Endothelial cell of umbilical vein (primary cell): ENCODE measurements at regions of chr2 and their contacts with region 1.

Region 1: DNA sequence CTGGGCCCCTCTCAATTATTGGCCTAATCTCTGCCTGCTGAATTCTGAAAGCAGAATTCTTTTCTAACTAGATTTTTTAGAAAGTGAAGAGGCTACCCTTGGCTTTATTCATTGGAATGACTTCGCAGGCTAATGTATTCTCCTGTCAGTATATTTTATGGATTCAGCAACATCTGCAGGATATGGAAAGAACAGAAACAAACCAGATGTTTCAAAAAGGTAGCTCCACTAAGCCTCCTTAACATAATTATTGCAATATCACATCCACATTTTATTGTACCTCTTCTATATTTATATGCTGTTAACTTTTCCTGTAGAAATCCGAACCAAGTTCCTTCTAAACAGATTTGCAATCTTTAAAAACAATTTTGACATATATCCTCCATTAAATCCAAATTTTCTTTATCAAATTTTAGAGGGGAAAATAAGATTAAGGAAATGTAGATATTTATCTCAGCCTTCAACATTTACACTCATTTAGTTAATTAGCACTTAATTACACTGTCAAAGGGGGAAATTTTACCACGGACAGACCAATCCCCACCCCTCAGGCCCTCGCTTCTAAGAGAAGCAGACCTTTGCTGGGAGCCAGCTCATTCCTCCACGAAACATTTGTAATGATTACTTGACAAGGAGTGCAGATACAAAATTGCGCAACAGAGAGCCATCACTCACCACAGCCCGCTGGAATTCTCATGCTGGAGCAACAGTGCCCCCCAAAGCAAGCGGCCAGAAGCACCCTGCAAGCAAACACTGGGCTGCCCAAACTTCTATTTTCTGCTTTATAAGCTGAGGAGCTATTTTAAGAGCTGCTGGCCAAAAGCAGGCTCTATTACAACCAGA is 253.4 kb downstream of the ETAA1 start:
- DNase-seq: peak; percentile 65
- H3K4me3 ChIP-seq: no peak overlapping the region
- H3K27ac ChIP-seq: no peak overlapping the region
- H3K4me1 ChIP-seq: no peaks in the 10 kb centered on the region
- H3K27me3 ChIP-seq: no peaks in the 10 kb centered on the region
- CTCF ChIP-seq: peak; percentile 55 to 67
- POLR2A ChIP-seq: no peak

Region 2: GRCh38 chr2:66699793-66700676 is 950.5 kb before region 1 on chr2:
- CTCF ChIA-PET with region 1: no interaction called
- POLR2A ChIA-PET with region 1: no interaction called
- dilution Hi-C with region 1: no loop called
- intact Hi-C with region 1: no loop called
- DNase-seq: no peak
- H3K4me3 ChIP-seq: no peak overlapping the region
- H3K27ac ChIP-seq: no peak overlapping the region
- H3K4me1 ChIP-seq: no peaks in the 10 kb centered on the region
- H3K27me3 ChIP-seq: no peaks in the 10 kb centered on the region
- CTCF ChIP-seq: no peak
- POLR2A ChIP-seq: no peak

Region 3: DNA sequence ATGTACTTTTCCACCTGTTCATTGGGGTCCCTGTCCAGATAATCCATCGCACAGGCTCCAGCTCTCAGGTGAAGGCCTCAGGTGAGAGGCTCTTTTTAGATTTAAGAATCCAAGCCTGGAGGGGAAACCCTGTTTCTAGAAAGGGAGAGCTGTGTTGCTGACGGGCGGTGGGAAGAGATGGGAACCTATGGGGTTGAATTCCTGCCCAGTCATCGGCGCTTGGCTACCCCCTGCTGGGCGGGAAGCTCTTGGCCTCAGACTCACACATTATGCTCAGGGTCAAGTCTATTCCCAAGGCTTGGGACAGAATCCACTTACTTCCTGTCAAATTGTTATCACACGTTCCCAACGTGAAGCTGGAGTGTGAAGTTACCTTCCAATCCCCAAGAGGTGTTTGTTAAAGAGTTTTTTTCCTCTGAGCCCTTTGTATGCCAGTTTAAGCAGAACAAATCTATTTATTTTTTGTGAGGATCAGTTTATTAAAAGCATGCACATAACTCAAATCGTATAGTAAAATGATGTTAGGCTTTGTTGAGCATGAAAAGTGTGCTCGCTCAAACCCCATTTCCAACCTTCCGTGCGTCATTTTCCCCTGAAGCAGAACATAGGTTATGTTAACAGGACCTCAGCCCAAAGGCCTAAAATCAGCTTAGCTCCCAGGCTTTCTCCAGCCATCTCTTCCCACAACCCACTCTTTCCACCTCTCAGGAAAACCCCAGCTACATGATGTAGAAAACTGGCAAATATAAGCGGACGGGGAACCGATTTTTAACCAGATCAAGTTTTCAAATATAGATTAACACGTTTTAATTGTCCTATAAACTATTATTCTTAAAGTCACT is 435.1 kb before region 1 on chr2:
- CTCF ChIA-PET with region 1: interaction called, 18 read pairs
- POLR2A ChIA-PET with region 1: no interaction called
- dilution Hi-C with region 1: no loop called
- intact Hi-C with region 1: no loop called
- DNase-seq: peak; percentile 77
- H3K4me3 ChIP-seq: no peak overlapping the region
- H3K27ac ChIP-seq: no peak overlapping the region
- H3K4me1 ChIP-seq: no peaks in the 10 kb centered on the region
- H3K27me3 ChIP-seq: no peaks in the 10 kb centered on the region
- CTCF ChIP-seq: peak; percentile 74 to 85
- POLR2A ChIP-seq: no peak

Region 4: DNA sequence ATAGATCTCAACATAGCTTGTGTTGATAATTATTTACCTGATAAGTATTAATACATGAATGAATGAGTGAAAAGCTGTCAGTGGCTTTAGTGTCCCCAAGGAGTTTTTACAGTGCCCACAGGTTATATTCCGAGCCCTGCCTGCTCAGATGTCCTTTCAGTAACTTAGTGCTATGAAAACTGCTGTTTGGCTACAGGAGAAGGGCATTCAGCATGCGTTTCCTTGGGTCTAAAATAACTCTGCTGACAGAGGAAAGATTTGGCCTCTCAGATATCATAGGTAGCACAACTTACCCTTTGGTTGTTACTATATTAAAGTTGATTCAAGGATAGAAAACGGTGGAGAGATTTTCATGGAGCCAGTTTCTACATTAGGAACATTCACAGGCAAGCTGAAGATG is 12.4 kb before region 1 on chr2:
- CTCF ChIA-PET with region 1: interaction called, 10 read pairs
- POLR2A ChIA-PET with region 1: no interaction called
- dilution Hi-C with region 1: no loop called
- intact Hi-C with region 1: no loop called
- DNase-seq: no peak
- H3K4me3 ChIP-seq: no peak overlapping the region
- H3K27ac ChIP-seq: no peak overlapping the region
- H3K4me1 ChIP-seq: no peaks in the 10 kb centered on the region
- H3K27me3 ChIP-seq: no peaks in the 10 kb centered on the region
- CTCF ChIP-seq: no peak
- POLR2A ChIP-seq: no peak

Region 5: GRCh38 chr2:67840460-67841068 is 190.1 kb after region 1 on chr2:
- CTCF ChIA-PET with region 1: interaction called, 19 read pairs
- POLR2A ChIA-PET with region 1: no interaction called
- dilution Hi-C with region 1: no loop called
- intact Hi-C with region 1: loop called (anchors 5 kb)
- DNase-seq: peak; percentile 80
- H3K4me3 ChIP-seq: no peak overlapping the region
- H3K27ac ChIP-seq: no peak overlapping the region
- H3K4me1 ChIP-seq: peaks cover 8% of the 10 kb centered on the region
- H3K27me3 ChIP-seq: no peaks in the 10 kb centered on the region
- CTCF ChIP-seq: peak; percentile 79 to 89
- POLR2A ChIP-seq: no peak